RWPE1 (cell line): ENCODE measurements at regions of chr19 and their contacts with region 1.

Region 1: DNA sequence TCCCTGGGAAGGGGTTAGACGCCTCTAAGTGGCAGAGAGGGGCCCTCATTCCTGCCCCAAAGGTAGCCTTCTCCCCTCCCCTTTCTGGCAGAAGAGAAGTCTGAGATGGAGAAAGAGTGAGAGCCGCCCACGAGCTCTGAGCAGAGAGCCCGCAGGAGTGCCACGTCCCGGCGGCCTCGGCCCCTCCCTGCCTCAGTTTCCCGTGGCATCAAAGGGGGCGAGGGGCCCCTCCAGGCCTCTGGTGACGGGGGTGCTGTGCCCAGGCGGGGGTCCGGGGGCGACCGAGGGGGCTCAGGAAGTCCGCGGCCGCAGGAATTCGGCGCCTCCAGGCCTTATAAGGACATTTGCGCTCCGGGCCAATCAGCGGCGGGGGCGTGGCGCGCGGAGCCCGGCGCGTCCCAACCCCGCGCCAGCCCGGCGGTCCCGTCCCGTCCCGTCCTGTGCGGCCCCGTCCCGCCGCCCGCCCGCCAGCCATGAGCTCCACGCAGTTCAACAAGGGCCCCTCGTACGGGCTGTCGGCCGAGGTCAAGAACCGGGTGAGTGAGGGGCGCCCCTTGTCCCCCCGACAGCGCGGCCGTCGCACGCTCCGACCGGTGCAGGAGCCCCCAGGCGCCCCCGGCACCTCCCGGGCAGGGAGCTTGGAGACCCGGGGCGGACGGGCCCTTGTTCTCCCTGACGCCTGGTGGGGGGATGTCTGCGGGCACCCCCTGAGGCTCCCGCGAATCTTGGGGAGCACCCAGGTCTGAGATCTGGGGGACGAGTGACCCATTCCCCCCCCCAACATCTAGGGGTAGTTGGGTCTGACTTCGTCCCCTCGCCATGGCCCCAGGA is at the start of gene CNN2:
- DNase-seq: peak; percentile 74
- H3K27ac ChIP-seq: peak within 1 kb of the TSS; percentile 99
- CTCF ChIP-seq: no peak

Region 2: GRCh38 chr19:958967-959820 is 67.2 kb before region 1 on chr19:
- CTCF ChIA-PET with region 1: no interaction called
- POLR2A ChIA-PET with region 1: no interaction called
- DNase-seq: peak; percentile 68
- H3K27ac ChIP-seq: peak overlapping the region; percentile 19
- CTCF ChIP-seq: no peak

Region 3: GRCh38 chr19:1001538-1002166 is 24.8 kb before region 1 on chr19:
- CTCF ChIA-PET with region 1: no interaction called
- POLR2A ChIA-PET with region 1: no interaction called
- DNase-seq: peak; percentile 48
- H3K27ac ChIP-seq: no peak overlapping the region
- CTCF ChIP-seq: peak; percentile 93

Region 4: DNA sequence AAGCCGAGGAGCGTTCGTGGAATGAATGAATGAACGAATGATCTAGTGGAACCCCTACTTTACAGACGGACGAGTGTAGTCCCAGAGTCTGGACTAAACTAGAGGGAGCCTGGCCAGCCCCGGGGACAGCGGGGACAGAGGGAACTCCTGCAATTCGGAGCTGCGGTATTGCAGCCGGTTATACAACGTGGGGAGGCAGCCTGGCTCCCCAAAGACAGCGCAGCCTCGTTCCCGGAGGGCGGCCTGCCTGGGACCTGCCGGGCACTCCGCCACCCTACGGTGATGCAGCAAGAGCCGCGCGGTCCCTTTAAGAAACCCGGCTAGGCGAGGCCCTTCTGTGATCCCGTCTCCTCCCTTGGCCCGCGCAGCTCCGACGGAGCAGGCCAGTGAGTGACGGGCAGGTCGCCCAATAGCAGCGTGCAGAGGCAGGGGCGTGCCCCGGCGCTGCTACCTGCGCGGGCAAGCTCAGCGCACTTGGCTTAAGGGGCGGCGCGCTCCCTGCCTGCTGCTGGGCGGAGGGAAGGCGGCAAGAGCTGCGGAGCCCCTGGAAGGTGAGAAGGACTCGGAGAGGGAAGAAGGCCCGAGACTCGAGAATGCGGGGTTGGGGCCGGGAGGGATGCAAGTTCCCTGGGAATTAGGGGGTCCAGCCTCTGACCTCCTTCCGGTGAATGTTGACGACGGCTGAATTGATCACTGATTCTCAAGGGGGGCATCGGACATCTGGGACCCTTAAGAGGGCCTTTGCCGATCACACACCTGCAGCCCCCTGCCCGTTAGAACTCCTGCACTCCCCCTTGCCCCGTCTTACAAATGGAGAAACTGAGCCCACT is 13.5 kb after region 1 on chr19 and contains the start of gene ABCA7:
- CTCF ChIA-PET with region 1: interaction called, 5 read pairs
- POLR2A ChIA-PET with region 1: interaction called, 11 read pairs
- DNase-seq: peak; percentile 96
- H3K27ac ChIP-seq: peak within 1 kb of the TSS; percentile 81
- CTCF ChIP-seq: no peak